Activated CD4-positive, alpha-beta memory T cell treated with anti-CD3 and anti-CD28 coated beads for 36 hours (primary cell): ENCODE measurements at regions of chr1 and their contacts with region 1.

Region 1: DNA sequence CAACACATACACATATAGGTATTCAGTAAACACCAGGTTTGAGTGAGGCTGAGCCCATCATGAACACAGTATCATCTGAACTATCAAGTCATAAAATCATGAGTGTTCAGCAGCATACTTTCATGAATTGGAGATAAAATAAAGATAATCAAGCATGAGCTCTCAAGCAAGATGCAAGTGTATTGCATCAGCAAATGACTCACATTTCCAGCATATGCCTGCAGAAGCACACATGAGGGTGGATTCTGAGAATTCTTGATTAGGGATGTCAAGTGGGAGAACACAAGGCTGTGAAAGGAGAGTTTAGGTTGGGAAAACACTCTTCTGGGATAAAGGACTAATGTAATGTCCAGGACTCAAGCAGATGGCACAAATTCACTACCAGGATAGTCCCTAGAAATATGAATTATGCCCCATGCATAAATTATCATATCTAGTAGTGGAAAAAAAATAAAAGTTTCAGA is 299.2 kb downstream of the SRGAP2C start:
- DNase-seq: no peak
- H3K4me3 Mint-ChIP-seq: no peak overlapping the region
- H3K27ac Mint-ChIP-seq: peak overlapping the region; percentile 71
- H3K4me1 Mint-ChIP-seq: peaks cover 18% of the 10 kb centered on the region
- H3K27me3 Mint-ChIP-seq: no peaks in the 10 kb centered on the region

Region 2: DNA sequence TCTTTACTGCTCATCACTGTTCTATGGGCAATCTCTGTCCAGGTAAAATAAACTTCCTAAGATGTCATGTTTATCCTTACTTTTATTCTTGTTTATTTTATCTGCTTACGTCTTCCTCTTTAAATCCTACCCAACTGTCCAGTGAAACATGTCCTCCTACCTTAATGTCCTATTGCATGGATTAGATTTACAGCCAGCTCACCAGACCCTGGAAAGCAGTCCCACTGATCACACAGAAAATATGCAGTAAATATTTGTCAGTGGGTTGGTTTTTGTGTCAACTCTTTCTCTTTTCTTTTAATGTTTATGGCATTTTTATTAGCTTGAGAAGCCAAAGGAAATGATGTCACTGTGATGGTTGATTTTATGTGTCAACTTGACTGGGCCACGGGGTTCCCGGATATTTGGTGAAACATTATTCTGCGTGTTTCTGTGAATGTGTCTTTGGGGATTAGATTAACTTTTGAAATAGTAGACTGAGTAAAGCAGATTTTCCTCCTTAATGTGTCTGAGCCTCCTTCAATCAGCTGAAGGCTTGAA is 40.9 kb before region 1 on chr1:
- CTCF ChIA-PET with region 1: no interaction called
- POLR2A ChIA-PET with region 1: no interaction called
- intact Hi-C with region 1: no loop called
- DNase-seq: no peak
- H3K4me3 Mint-ChIP-seq: no peak overlapping the region
- H3K27ac Mint-ChIP-seq: no peak overlapping the region
- H3K4me1 Mint-ChIP-seq: peaks cover 10% of the 10 kb centered on the region
- H3K27me3 Mint-ChIP-seq: no peaks in the 10 kb centered on the region

Region 3: DNA sequence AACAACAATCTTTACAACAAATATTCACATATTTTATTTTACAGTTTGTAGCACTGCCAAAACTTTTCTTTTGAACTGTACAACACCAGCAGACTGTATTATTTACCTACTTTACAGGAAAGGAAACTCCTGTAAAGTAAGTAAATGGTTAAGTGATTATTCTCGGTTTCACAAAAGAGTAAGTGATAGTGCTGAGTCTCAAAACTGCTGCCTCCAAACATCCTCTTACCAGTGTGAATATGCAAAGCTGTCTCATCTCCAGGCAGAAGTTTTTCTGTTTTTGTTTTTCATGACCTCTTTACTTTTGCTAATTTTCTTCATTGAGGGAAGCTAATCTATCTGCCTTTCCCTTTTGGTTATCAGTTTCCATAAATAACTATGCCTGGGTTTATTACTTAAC is 12.5 kb before region 1 on chr1:
- CTCF ChIA-PET with region 1: no interaction called
- POLR2A ChIA-PET with region 1: no interaction called
- intact Hi-C with region 1: no loop called
- DNase-seq: no peak
- H3K4me3 Mint-ChIP-seq: no peak overlapping the region
- H3K27ac Mint-ChIP-seq: no peak overlapping the region
- H3K4me1 Mint-ChIP-seq: peaks cover 9% of the 10 kb centered on the region
- H3K27me3 Mint-ChIP-seq: no peaks in the 10 kb centered on the region

Region 4: GRCh38 chr1:121516234-121516967 is 32.4 kb after region 1 on chr1:
- CTCF ChIA-PET with region 1: no interaction called
- POLR2A ChIA-PET with region 1: interaction called, 6 read pairs
- intact Hi-C with region 1: loop called (anchors 2 kb)
- DNase-seq: peak; percentile 53
- H3K4me3 Mint-ChIP-seq: peak overlapping the region; percentile 62
- H3K27ac Mint-ChIP-seq: peak overlapping the region; percentile 82
- H3K4me1 Mint-ChIP-seq: peaks cover 55% of the 10 kb centered on the region
- H3K27me3 Mint-ChIP-seq: no peaks in the 10 kb centered on the region

Region 5: GRCh38 chr1:121538943-121539575 is 55.1 kb after region 1 on chr1:
- CTCF ChIA-PET with region 1: no interaction called
- POLR2A ChIA-PET with region 1: no interaction called
- intact Hi-C with region 1: no loop called
- DNase-seq: no peak
- H3K4me3 Mint-ChIP-seq: no peak overlapping the region
- H3K27ac Mint-ChIP-seq: no peak overlapping the region
- H3K4me1 Mint-ChIP-seq: no peaks in the 10 kb centered on the region
- H3K27me3 Mint-ChIP-seq: no peaks in the 10 kb centered on the region